CD4-positive, alpha-beta T cell (primary cell): ENCODE measurements at regions of chr5 and their contacts with region 1.

Region 1: DNA sequence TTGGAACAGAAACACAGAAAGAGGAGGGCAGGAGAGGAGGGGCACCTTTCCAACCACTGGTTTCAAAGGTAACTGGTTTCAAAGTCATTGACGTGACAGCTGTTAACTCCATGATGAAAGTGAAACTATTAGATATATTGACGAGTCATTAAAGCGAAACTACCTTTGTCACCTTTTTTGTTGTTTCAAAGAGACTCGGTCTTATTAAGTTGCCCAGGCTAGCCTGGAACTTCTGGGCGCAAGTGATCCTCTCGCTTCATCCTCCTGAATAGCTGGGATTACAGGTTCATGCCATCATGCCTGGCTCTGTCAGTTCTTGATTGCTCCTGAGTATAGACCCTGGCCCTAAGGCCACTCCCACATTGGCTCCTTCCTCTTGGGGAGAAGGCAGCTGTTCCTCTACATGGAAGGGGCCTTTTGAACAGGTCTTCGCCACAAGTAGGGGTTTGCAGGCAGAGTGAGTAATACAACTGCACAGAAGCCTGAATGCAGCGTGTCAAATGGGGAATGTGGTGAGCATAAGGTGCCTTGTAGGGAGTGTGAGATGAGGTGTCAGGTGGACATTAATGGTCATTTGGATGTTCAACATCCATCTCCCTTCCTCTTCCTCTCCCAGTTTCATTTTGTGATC is 3.4 kb upstream of the F12 start:
- DNase-seq: peak in 3 of 14 experiments; percentile 73 to 85 (median 74)
- ATAC-seq: peak; percentile 61
- H3K4me3 ChIP-seq: peak overlapping the region; percentile 28
- H3K4me3 Mint-ChIP-seq: peak overlapping the region; percentile 48
- H3K27ac ChIP-seq: no peak overlapping the region
- H3K27ac Mint-ChIP-seq: peak overlapping the region; percentile 64
- H3K4me1 ChIP-seq: peaks cover 51% of the 10 kb centered on the region
- H3K4me1 Mint-ChIP-seq: peaks cover 45% of the 10 kb centered on the region
- H3K27me3 ChIP-seq: no peaks in the 10 kb centered on the region
- H3K27me3 Mint-ChIP-seq: no peaks in the 10 kb centered on the region
- CTCF ChIP-seq: no peak

Region 2: DNA sequence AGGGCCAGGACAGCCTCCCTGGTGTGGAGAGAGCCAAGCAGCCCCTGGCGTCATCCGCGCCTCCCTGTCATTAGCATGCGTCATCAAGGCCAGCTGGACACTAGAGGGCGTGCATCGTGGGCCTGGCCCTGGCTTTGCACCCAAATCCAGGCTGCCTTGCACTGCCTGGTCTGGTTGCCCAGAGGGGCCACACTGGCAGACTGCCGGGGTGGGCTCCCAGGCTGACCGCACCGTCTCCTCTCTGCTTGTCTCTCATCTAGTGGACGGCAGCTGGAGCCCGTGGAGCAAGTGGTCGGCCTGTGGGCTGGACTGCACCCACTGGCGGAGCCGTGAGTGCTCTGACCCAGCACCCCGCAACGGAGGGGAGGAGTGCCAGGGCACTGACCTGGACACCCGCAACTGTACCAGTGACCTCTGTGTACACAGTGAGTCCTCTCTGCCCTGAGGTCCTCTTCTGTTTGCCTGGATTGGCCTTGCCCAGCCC is 542.6 kb before region 1 on chr5:
- CTCF ChIA-PET with region 1: no interaction called
- POLR2A ChIA-PET with region 1: no interaction called
- intact Hi-C with region 1: no loop called
- DNase-seq: peak in 1 of 14 experiments; percentile 9
- ATAC-seq: no peak
- H3K4me3 ChIP-seq: no peak overlapping the region
- H3K4me3 Mint-ChIP-seq: no peak overlapping the region
- H3K27ac ChIP-seq: no peak overlapping the region
- H3K27ac Mint-ChIP-seq: no peak overlapping the region
- H3K4me1 ChIP-seq: peaks cover 14% of the 10 kb centered on the region
- H3K4me1 Mint-ChIP-seq: peaks cover 5% of the 10 kb centered on the region
- H3K27me3 ChIP-seq: peaks cover 14 to 30% of the 10 kb centered on the region in 2 experiments
- H3K27me3 Mint-ChIP-seq: peaks cover 24% of the 10 kb centered on the region
- CTCF ChIP-seq: no peak

Region 3: GRCh38 chr5:177311723-177312648 is 100.7 kb before region 1 on chr5 and contains the start of gene MXD3:
- CTCF ChIA-PET with region 1: no interaction called
- POLR2A ChIA-PET with region 1: no interaction called
- intact Hi-C with region 1: no loop called
- DNase-seq: peak; percentile 87 to 96 (median 94)
- ATAC-seq: peak; percentile 93
- H3K4me3 ChIP-seq: peak within 1 kb of the TSS; percentile 69
- H3K4me3 Mint-ChIP-seq: peak within 1 kb of the TSS; percentile 83
- H3K27ac ChIP-seq: peak within 1 kb of the TSS in 1 of 2 donors; percentile 3
- H3K27ac Mint-ChIP-seq: no peak within 1 kb of the TSS
- H3K4me1 ChIP-seq: peaks cover 59% of the 10 kb centered on the region
- H3K4me1 Mint-ChIP-seq: peaks cover 40% of the 10 kb centered on the region
- H3K27me3 ChIP-seq: peaks cover 0 to 3% of the 10 kb centered on the region in 2 experiments
- H3K27me3 Mint-ChIP-seq: peaks cover 6% of the 10 kb centered on the region
- CTCF ChIP-seq: no peak
- total RNA-seq, gene MXD3: 5.8 to 7.5 TPM

Region 4: GRCh38 chr5:177431317-177432142 is 18.8 kb after region 1 on chr5:
- CTCF ChIA-PET with region 1: no interaction called
- POLR2A ChIA-PET with region 1: interaction called, 250 read pairs
- intact Hi-C with region 1: no loop called
- DNase-seq: peak in 12 of 14 experiments; percentile 45 to 93 (median 70)
- ATAC-seq: peak; percentile 43
- H3K4me3 ChIP-seq: peak overlapping the region; percentile 65
- H3K4me3 Mint-ChIP-seq: peak overlapping the region; percentile 95
- H3K27ac ChIP-seq: peak overlapping the region; percentile 87 to 92
- H3K27ac Mint-ChIP-seq: peak overlapping the region; percentile 96
- H3K4me1 ChIP-seq: peaks cover 96% of the 10 kb centered on the region
- H3K4me1 Mint-ChIP-seq: peaks cover 62% of the 10 kb centered on the region
- H3K27me3 ChIP-seq: no peaks in the 10 kb centered on the region
- H3K27me3 Mint-ChIP-seq: no peaks in the 10 kb centered on the region
- CTCF ChIP-seq: no peak

Region 5: DNA sequence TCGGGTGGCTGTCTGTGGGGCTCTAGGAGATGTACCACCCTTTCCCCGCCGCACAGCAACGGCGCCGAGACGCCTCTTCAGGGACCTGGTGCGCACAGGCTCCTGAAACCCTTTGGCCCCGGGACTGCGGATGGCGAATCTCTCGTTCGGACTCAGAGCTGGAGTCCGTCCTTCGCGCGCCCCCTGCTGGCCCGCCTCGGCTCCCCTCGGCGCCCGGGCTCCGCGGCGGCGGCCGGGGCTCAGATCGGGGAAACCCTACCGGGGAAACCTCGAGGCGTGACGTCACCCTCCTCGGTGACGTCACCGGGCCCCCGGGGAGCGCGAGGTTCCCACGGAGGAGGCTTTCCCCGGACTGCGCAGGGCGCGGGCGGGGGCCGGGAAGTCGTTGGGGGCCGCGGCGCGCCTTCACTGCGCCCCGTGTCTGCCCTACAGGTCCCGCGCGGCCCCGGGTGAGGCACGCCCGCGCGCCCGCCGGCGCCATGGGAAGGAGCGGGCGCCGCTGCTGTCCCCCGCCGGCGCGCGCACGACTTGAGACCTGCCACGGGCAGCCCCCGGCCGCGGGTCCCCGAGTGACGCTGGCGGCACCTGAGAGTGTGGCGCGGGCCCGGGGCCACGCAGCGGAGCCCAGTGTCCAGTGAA is 41.8 kb after region 1 on chr5:
- CTCF ChIA-PET with region 1: interaction called, 352 read pairs
- POLR2A ChIA-PET with region 1: interaction called, 435 read pairs
- intact Hi-C with region 1: no loop called
- DNase-seq: peak; percentile 87 to 97 (median 94)
- ATAC-seq: peak; percentile 45
- H3K4me3 ChIP-seq: peak overlapping the region; percentile 71
- H3K4me3 Mint-ChIP-seq: peak overlapping the region; percentile 89
- H3K27ac ChIP-seq: peak overlapping the region; percentile 90 to 95
- H3K27ac Mint-ChIP-seq: peak overlapping the region; percentile 93
- H3K4me1 ChIP-seq: peaks cover 52% of the 10 kb centered on the region
- H3K4me1 Mint-ChIP-seq: peaks cover 43% of the 10 kb centered on the region
- H3K27me3 ChIP-seq: no peaks in the 10 kb centered on the region
- H3K27me3 Mint-ChIP-seq: no peaks in the 10 kb centered on the region
- CTCF ChIP-seq: peak; percentile 79

Region 6: GRCh38 chr5:177516604-177517568 is 104.2 kb after region 1 on chr5 and contains the start of gene DDX41:
- CTCF ChIA-PET with region 1: no interaction called
- POLR2A ChIA-PET with region 1: no interaction called
- intact Hi-C with region 1: no loop called
- DNase-seq: peak; percentile 88 to 98 (median 94)
- ATAC-seq: peak; percentile 90
- H3K4me3 ChIP-seq: peak within 1 kb of the TSS; percentile 72
- H3K4me3 Mint-ChIP-seq: peak within 1 kb of the TSS; percentile 93
- H3K27ac ChIP-seq: peak within 1 kb of the TSS; percentile 36 to 54
- H3K27ac Mint-ChIP-seq: peak within 1 kb of the TSS; percentile 84
- H3K4me1 ChIP-seq: peaks cover 51% of the 10 kb centered on the region
- H3K4me1 Mint-ChIP-seq: peaks cover 43% of the 10 kb centered on the region
- H3K27me3 ChIP-seq: no peaks in the 10 kb centered on the region
- H3K27me3 Mint-ChIP-seq: no peaks in the 10 kb centered on the region
- CTCF ChIP-seq: no peak
- total RNA-seq, gene DDX41: 49.6 to 49.7 TPM